ENCODE measurements at regions of chr2 and their contacts with region 1.

Region 1: DNA sequence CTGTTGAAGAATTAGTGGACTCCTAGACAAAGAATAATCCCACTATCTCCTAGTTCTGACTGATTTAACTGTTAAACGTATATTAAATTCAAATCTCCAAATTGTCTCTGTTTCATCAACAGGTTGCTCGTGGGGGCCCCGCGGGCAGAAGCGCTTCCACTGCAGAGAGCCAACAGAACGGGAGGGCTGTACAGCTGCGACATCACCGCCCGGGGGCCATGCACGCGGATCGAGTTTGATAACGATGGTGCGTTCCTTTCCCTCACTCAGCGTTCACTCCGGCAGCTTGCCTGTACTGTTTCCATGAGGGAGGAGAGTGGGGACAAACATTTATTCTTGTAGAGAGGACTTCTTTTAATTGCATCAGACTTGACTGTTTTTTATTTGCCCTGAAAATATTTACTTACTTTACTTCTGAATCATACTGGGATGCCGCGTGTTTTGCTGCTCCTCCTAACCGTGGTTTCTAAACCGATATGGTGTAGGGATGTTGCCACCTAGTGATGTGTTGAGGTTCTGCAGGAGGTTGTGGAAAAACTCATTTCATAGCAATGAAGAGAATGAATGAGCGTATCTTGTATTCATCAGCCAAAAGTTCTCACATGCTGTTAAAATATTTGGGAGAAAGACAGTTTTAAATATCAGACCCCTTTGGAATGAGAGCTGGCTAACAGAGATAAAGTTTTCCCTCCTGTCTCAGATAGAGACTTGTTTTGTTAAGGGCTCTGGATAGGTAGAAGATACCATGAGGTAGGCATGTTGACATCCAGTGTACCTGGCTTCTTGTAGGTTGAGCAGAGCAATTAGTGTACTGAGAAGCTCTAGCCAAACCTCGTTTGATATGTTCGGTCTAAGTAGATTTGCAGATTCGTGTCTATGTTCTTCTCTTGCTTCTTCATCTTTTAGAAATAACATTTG is 38.3 kb downstream of the ITGA6 start:
- DNase-seq: peak; percentile 89
- ATAC-seq: peak; percentile 91
- H3K4me3 ChIP-seq: peak overlapping the region; percentile 46
- H3K27ac ChIP-seq: peak overlapping the region; percentile 44
- H3K4me1 ChIP-seq: peaks cover 6% of the 10 kb centered on the region
- H3K27me3 ChIP-seq: no peaks in the 10 kb centered on the region
- CTCF ChIP-seq: peak; percentile 95
- POLR2A ChIP-seq: 0 out of 2 replicates have a peak, but pooled peaks have one; percentile 39
- RAD21 ChIP-seq: peak; percentile 97

Region 2: GRCh38 chr2:171574149-171574795 is 891.4 kb before region 1 on chr2:
- CTCF ChIA-PET with region 1: no interaction called
- POLR2A ChIA-PET with region 1: no interaction called
- dilution Hi-C with region 1: no loop called
- in situ Hi-C with region 1: loop called (anchors 10 kb)
- intact Hi-C with region 1: loop called (anchors 2 kb)
- DNase-seq: peak; percentile 68
- ATAC-seq: peak; percentile 100
- H3K4me3 ChIP-seq: no peak overlapping the region
- H3K27ac ChIP-seq: no peak overlapping the region
- H3K4me1 ChIP-seq: no peaks in the 10 kb centered on the region
- H3K27me3 ChIP-seq: 0 out of 2 replicates have a peak, but pooled peaks cover 5% of the 10 kb centered on the region
- CTCF ChIP-seq: peak; percentile 98
- POLR2A ChIP-seq: peak; percentile 66
- RAD21 ChIP-seq: peak; percentile 98

Region 3: DNA sequence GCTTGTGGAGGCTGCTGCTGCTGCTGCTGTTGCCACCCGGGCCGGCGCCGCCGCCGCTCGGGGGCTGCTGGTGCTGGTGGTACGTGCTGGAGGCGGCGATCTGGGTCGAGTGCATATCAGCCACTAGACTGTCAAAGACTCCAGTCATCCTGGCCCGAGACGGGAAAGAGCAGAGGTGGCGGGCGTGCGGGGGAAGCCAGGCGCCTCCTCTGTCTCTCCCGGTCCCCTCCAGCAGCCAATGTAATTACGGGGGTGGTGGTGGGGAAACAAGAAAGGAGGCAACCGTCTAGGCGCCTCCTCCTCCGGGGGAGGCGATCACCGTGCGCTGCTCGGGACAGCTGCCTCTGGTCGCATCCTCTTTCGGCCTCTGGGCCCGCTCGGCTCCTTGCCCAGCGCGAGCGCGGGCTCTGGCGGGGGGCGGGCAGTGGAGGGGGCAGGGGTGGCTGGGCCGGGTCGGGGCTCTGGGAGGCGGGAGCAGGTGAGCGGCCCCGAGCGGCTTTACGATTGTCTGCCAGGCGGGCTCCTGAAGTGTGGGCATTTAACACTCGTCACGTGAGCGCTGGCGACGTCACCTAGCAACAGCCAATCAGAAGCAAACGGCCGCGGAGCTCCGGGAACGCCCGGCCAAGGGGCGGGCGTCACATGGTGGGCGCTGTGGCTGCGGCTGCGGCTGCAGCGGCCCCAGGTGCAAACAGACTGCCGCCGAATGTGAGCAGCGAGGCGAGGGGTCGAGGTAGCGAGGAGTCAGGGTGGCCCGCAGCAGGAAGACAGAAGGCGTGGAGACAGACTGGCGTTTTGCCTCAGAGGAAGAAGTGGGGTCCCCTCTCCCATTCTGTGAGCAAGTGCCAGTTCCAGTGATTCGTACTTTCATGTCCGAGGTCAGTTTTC is 363.0 kb before region 1 on chr2 and contains the start of gene DLX2:
- CTCF ChIA-PET with region 1: no interaction called
- POLR2A ChIA-PET with region 1: no interaction called
- dilution Hi-C with region 1: no loop called
- in situ Hi-C with region 1: no loop called
- intact Hi-C with region 1: loop called (anchors 5 kb)
- DNase-seq: peak; percentile 86
- ATAC-seq: peak; percentile 58
- H3K4me3 ChIP-seq: peak within 1 kb of the TSS; percentile 54
- H3K27ac ChIP-seq: peak within 1 kb of the TSS; percentile 32; the same call in 1 of the 2 replicates
- H3K4me1 ChIP-seq: peaks cover 9% of the 10 kb centered on the region
- H3K27me3 ChIP-seq: no peaks in the 10 kb centered on the region; the same call in 1 of the 2 replicates
- CTCF ChIP-seq: no peak
- POLR2A ChIP-seq: peak; percentile 44; the same call in 1 of the 2 replicates
- RAD21 ChIP-seq: 0 out of 2 replicates have a peak, but pooled peaks have one; percentile 6
- total RNA-seq, gene DLX2: not detected in 2 replicates

Region 4: DNA sequence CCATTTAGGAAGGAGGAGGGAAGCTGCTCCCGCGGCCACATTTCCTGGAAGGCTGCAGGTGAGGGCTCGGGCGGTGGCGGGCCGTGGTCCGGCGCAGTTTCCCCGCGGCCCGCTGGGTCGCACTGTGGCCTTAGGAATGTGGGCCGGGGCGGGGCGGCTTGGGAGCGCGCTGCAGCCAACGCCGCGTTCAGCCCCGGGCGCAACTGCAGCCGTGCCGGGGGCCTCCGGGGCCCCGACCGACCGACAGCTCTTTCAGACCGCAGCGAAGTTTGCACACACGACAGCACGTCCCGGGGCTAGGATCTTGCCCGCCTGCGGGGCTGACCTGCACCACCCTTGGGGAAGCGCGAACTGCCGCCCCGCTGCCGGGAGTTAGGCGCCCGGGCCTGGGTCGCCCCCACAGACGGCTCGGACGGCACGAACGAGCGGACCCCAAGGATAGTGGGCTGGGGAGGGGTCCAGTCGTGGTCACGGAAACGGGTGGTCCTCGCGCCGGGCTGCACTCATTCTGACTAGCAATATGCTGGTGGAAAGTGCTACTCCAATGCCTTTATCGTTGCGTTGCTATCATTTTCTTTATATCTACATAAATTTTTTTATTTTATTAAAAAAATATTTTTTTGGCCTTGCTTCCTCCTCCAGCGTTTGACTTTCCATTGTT is 293.0 kb before region 1 on chr2:
- CTCF ChIA-PET with region 1: interaction called, 22 read pairs
- POLR2A ChIA-PET with region 1: no interaction called
- dilution Hi-C with region 1: no loop called
- in situ Hi-C with region 1: loop called (anchors 5 kb)
- intact Hi-C with region 1: loop called (anchors 1 kb)
- DNase-seq: peak; percentile 44
- ATAC-seq: peak; percentile 99
- H3K4me3 ChIP-seq: peak overlapping the region; percentile 77
- H3K27ac ChIP-seq: peak overlapping the region; percentile 33; the same call in 1 of the 2 replicates
- H3K4me1 ChIP-seq: peaks cover 2% of the 10 kb centered on the region; the same call in 1 of the 2 replicates
- H3K27me3 ChIP-seq: 0 out of 2 replicates have a peak, but pooled peaks cover 3% of the 10 kb centered on the region
- CTCF ChIP-seq: peak; percentile 91
- POLR2A ChIP-seq: 0 out of 2 replicates have a peak, but pooled peaks have one; percentile 50
- RAD21 ChIP-seq: peak; percentile 96

Region 5: DNA sequence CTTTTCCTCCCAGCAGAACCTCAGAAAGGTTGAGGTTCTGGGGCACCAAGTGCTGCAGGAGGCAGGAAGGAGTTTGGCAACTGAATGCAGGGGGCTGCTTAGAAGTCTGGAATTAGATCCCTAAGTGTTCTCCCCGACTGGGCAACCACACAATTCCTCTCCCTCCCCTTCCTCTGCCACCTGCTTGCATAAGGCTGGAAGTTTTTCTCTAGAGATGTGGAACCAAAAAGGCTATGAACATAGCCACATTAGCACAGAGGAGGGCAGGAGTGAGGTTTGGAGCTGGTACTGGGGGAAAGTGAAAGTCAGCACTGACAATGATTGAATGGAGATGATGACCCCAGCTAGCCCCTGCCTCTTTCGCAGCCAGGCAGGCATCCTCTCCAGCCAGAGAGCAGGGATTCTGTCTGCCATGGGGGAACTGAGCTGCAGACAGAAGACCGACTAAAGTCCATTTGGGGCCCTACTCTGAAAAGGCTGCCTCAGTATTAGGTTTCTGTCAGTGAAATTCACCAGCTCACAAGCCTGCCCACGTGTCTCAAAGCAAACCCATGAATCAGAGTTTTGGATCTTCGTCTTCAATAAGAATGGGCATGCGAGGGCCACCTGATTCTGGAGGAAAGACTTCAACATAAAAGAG is 126.2 kb before region 1 on chr2:
- CTCF ChIA-PET with region 1: interaction called, 3 read pairs
- POLR2A ChIA-PET with region 1: no interaction called
- dilution Hi-C with region 1: no loop called
- in situ Hi-C with region 1: no loop called
- intact Hi-C with region 1: loop called (anchors 5 kb)
- DNase-seq: peak; percentile 29
- ATAC-seq: peak; percentile 66
- H3K4me3 ChIP-seq: no peak overlapping the region
- H3K27ac ChIP-seq: no peak overlapping the region
- H3K4me1 ChIP-seq: peaks cover 9% of the 10 kb centered on the region
- H3K27me3 ChIP-seq: no peaks in the 10 kb centered on the region
- CTCF ChIP-seq: no peak
- POLR2A ChIP-seq: no peak
- RAD21 ChIP-seq: no peak

Region 6: DNA sequence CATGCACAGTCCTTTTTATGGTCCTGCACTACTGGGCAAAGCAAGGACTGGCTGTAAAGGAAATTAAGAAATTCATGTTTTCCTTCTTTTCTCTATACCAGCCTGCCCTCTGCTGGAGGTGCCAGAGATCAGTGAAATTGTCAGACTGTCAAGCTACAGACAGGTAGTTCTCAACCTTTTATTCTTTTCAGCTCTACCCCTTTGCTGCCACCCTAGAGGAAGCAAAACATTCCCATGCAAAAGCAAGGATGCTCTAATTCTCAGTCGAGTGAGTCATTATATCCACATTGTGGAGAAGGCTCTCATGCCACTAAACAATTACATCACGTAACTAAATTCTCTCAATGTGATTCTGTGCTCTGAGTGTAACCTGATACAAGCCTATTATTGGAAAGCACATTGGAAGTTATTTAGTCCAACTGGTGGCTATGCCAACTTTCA is 244.9 kb after region 1 on chr2:
- CTCF ChIA-PET with region 1: interaction called, 4 read pairs
- POLR2A ChIA-PET with region 1: no interaction called
- dilution Hi-C with region 1: no loop called
- in situ Hi-C with region 1: no loop called
- intact Hi-C with region 1: loop called (anchors 1 kb)
- DNase-seq: peak; percentile 95
- ATAC-seq: peak; percentile 95
- H3K4me3 ChIP-seq: no peak overlapping the region
- H3K27ac ChIP-seq: no peak overlapping the region
- H3K4me1 ChIP-seq: peaks cover 2% of the 10 kb centered on the region
- H3K27me3 ChIP-seq: no peaks in the 10 kb centered on the region
- CTCF ChIP-seq: peak; percentile 47
- POLR2A ChIP-seq: no peak
- RAD21 ChIP-seq: peak; percentile 70